ENCODE measurements at regions of chr9 and their contacts with region 1.

Region 1: DNA sequence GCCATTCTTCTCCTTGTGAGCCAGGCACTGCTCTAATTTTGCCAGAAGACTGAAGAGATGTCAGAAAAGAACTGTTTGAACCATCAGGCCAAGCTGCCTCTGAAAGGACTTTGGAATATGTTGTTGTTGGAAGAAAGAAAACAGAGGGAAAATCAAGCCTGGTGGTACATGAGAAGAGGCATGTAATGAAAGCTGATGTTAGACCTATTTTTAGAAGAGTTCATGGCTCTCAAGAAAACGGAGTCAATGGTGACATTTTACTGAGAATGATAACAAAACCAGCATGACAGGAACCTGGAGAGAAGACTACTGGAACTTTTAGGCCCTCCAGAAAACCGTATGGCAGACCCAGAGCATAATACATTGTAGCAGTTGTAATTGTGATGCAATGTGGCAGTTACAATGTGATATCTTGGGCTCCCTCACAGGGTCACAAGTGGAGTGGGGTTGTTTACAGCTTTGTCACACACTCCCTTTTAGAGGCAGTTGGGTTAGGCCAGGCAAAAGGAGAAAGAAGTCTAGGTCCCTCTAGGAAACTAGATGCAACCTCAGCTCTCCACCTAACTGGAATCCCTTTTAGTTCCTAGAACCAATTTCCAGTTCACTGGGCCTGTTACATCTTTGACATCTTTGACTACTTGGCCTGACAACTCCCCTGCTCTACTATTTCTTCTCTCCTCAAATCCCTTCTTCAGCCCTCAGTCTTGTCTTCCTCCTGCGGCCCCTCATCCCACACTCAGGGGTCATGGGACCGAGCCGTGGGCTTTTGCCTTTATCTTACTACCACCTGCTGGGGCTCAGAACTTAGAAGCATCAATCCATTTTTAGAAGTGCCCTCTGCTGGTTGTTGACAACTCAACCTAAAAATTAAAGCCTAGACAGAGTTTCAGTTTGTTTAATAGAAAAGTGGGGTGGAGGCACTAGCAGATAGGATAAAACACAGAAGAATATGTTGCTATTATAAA is 61.2 kb upstream of the JAK2 start:
- DNase-seq: peak in 1 of 2 donors; percentile 20
- H3K4me3 ChIP-seq: no peak overlapping the region
- H3K27ac ChIP-seq: no peak overlapping the region
- H3K4me1 ChIP-seq: peaks cover 0 to 6% (median 0%) of the 10 kb centered on the region in 4 donors
- H3K27me3 ChIP-seq: no peaks in the 10 kb centered on the region
- CTCF ChIP-seq: peak in 2 of 7 experiments; percentile 8 to 20
- EP300 ChIP-seq: no peak
- POLR2A ChIP-seq: no peak

Region 2: GRCh38 chr9:4762108-4762885 is 161.6 kb before region 1 on chr9:
- intact Hi-C with region 1: loop called (anchors 10 kb)
- DNase-seq: peak; percentile 88 to 92
- H3K4me3 ChIP-seq: peak overlapping the region; percentile 2 to 31 (median 10)
- H3K27ac ChIP-seq: peak overlapping the region in 3 of 5 donors; percentile 47 to 73 (median 61)
- H3K4me1 ChIP-seq: peaks cover 4 to 40% (median 18%) of the 10 kb centered on the region in 4 donors
- H3K27me3 ChIP-seq: no peaks in the 10 kb centered on the region
- CTCF ChIP-seq: peak in 5 of 7 experiments; percentile 70 to 85 (median 79)
- EP300 ChIP-seq: no peak
- POLR2A ChIP-seq: no peak

Region 3: DNA sequence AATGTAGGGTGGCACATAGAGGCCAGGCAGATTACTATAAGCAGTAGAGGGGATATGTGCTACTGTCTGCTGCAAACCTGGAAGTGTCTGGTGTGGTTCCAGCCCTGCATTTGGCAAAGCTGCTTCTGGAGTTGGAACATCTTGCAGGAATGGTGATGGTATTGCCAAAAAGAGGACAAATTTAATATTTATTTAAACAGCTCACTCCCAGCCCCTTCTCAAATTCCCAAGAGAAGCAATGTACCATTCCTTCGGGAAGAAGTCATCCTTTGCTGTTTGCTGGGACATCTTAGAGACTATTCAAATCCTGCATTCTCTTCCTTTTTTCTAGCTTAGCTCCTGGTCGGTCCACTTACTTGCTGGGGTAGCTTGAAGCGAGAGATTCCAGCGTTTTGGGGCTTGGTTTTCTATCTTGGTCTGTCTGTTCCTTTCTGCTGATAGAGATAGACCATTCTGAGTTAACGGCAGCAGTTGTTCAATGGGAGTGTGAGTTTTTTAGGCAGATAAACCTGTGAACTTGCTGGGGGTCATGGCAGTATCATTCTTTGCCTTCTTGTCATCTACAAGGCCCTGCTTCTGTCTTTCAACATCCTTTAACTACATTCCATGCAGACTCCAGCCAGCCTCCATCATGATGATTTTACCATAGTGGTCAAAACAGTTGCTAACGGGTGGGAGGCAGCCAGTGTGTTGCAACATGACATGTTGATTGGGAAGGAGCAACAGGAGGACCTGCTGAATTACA is 61.2 kb before region 1 on chr9:
- intact Hi-C with region 1: no loop called
- DNase-seq: no peak
- H3K4me3 ChIP-seq: no peak overlapping the region
- H3K27ac ChIP-seq: no peak overlapping the region
- H3K4me1 ChIP-seq: peaks cover 0 to 6% (median 0%) of the 10 kb centered on the region in 4 donors
- H3K27me3 ChIP-seq: no peaks in the 10 kb centered on the region
- CTCF ChIP-seq: no peak
- EP300 ChIP-seq: no peak
- POLR2A ChIP-seq: no peak

Measured in stomach (tissue), 19 donors.